ENCODE measurements at regions of chr18 and their contacts with region 1.

Region 1: DNA sequence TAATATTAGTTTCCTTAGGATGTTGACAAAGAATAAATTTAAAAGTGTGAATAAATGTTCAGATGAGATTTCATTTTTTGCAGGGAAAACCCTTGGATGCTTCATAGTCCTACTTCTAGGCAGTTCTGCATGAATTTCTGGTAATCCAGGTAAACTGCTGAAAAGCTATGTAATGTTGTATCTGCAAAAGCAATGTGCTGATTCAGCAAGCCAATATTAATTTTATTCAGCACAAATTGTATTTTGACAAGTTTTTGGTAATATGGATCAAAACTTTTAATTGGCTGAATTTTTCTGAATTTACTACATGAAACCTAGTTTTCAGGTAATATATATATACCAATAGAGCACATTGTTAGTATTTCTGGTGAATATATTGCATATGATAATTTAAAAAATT is 17.8 kb upstream of the RBBP8 start:
- DNase-seq: no peak
- ATAC-seq: no peak
- H3K4me3 Mint-ChIP-seq: no peak overlapping the region
- H3K27ac Mint-ChIP-seq: no peak overlapping the region
- H3K4me1 Mint-ChIP-seq: peaks cover 51% of the 10 kb centered on the region
- H3K27me3 Mint-ChIP-seq: no peaks in the 10 kb centered on the region
- CTCF ChIP-seq: no peak

Region 2: GRCh38 chr18:22930089-22930713 is 14.9 kb after region 1 on chr18:
- CTCF ChIA-PET with region 1: interaction called, 12 read pairs
- POLR2A ChIA-PET with region 1: interaction called, 4 read pairs
- DNase-seq: peak; percentile 89
- ATAC-seq: peak; percentile 43
- H3K4me3 Mint-ChIP-seq: no peak overlapping the region
- H3K27ac Mint-ChIP-seq: no peak overlapping the region
- H3K4me1 Mint-ChIP-seq: peaks cover 26% of the 10 kb centered on the region
- H3K27me3 Mint-ChIP-seq: peaks cover 6% of the 10 kb centered on the region; the same call in 1 of the 2 replicates
- CTCF ChIP-seq: peak; percentile 62; the same call in 1 of the 2 replicates

Region 3: DNA sequence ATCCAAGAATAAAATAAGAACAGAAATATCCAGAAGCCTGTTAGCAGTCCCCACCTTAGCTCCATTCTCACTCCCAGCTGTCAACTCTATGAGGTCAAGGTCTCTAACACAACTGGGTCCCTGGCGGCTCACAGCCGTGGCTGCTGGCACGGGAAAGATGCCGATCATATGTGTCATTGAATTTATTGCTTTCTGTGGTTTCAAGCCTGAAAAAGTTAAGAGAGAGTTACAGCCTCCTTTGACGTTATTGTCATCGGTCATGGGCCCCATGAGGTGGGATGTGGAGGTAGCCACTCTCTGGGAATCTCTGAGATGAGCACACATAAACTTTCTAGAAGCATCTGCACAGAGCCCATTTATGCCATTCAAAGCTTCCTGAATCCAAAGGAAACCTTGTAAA is 191.2 kb after region 1 on chr18:
- CTCF ChIA-PET with region 1: no interaction called
- POLR2A ChIA-PET with region 1: no interaction called
- DNase-seq: no peak
- ATAC-seq: no peak
- H3K4me3 Mint-ChIP-seq: no peak overlapping the region
- H3K27ac Mint-ChIP-seq: no peak overlapping the region
- H3K4me1 Mint-ChIP-seq: peaks cover 14% of the 10 kb centered on the region; the same call in 1 of the 2 replicates
- H3K27me3 Mint-ChIP-seq: peaks cover under 1% of the 10 kb centered on the region; the same call in 1 of the 2 replicates
- CTCF ChIP-seq: no peak